ENCODE measurements at regions of chr1 and their contacts with region 1.

Region 1: DNA sequence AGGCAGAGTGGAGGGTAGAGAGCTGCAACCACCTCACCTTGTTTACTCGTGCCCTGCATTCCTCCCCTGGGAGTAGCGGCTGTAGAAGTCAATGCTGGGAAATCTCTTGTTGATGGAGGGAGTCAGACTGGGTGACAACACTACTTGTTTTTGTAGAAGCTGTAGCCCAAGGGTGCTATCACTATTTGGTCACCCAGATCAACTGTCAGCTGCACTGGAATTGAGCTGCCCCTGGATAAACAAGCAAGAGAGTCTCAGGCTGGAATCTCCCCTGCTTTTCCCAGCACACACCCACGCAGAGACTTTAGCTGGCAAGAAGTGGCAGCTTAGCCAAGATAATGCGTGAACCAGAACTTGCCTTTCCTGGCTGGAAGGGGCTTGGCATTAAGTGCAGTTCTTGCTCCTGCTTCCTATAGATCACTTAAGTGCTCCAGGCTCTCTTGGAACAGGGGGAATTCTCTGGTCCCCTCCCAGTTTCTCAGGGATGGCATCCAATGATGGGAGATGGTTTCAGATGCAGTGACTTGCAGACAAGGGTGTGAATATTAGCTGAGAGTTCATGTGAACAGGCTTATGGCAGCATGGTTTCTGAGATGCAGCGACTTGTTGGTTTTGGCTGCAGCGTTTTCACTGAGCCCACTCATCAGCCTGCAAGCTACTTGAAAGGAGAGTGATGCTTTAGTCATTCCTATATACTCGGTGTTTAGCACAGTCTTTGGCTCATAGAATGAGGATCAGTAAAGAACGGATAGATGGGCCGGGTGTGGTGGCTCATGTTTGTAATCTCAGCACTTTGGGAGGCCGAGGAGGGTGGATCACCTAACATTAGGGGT is 16.8 kb downstream of the ATP2B4 start:
- DNase-seq: peak; percentile 86
- H3K4me3 ChIP-seq: no peak overlapping the region
- H3K27ac ChIP-seq: peak overlapping the region; percentile 51
- H3K4me1 ChIP-seq: peaks cover 43% of the 10 kb centered on the region
- H3K27me3 ChIP-seq: no peaks in the 10 kb centered on the region
- CTCF ChIP-seq: no peak

Region 2: GRCh38 chr1:203202431-203203245 is 440.8 kb before region 1 on chr1:
- CTCF ChIA-PET with region 1: no interaction called
- dilution Hi-C with region 1: no loop called
- in situ Hi-C with region 1: no loop called
- intact Hi-C with region 1: no loop called
- DNase-seq: peak; percentile 17
- H3K4me3 ChIP-seq: no peak overlapping the region
- H3K27ac ChIP-seq: no peak overlapping the region
- H3K4me1 ChIP-seq: peaks cover 15% of the 10 kb centered on the region
- H3K27me3 ChIP-seq: no peaks in the 10 kb centered on the region
- CTCF ChIP-seq: no peak

Region 3: DNA sequence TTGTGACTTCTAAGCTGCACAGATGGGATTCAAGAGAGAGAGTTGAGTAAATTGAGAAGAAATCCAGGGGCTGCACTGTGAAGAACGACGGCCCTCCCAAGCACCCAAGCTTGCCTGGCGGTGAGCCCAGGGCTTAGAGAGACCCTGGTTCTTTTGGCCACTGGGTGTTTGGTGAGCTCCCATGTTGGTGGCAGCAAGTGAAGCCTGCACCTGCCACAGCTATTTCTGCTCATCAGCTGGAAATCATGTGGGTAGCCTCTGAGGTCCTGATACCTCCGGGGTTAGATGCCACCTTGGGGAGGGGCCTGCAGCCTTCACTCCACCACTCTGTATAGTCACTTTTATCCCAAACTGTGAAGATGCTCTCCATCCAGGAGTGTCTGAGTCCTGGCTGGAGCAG is 344.3 kb before region 1 on chr1:
- CTCF ChIA-PET with region 1: no interaction called
- dilution Hi-C with region 1: no loop called
- in situ Hi-C with region 1: no loop called
- intact Hi-C with region 1: no loop called
- DNase-seq: no peak
- H3K4me3 ChIP-seq: no peak overlapping the region
- H3K27ac ChIP-seq: no peak overlapping the region
- H3K4me1 ChIP-seq: peaks cover 15% of the 10 kb centered on the region
- H3K27me3 ChIP-seq: no peaks in the 10 kb centered on the region
- CTCF ChIP-seq: no peak

Region 4: DNA sequence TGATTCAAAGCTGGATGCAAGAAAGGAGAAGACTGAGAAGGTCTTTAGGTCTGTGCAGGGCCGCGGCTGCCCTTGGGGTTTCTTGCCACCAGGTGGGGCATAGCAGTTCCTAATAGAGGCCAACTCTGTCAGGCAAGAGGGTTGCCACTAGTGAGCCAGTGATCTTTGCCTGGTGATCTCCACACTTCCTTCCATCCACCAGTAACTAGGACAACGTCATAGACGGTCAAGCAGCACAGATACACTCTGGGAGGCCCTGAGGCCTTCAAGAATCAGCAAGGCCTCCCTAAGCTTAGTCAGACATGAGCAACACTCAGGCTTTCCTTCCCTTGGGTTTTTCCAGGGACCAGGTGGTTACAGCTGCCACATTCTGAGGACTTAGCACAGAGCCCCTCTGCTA is 49.7 kb before region 1 on chr1:
- CTCF ChIA-PET with region 1: no interaction called
- dilution Hi-C with region 1: no loop called
- in situ Hi-C with region 1: no loop called
- intact Hi-C with region 1: loop called (anchors 5 kb)
- DNase-seq: peak; percentile 62
- H3K4me3 ChIP-seq: no peak overlapping the region
- H3K27ac ChIP-seq: no peak overlapping the region
- H3K4me1 ChIP-seq: peaks cover 3% of the 10 kb centered on the region
- H3K27me3 ChIP-seq: no peaks in the 10 kb centered on the region
- CTCF ChIP-seq: peak; percentile 11 to 39

Region 5: GRCh38 chr1:203711251-203712007 is 68.0 kb after region 1 on chr1:
- CTCF ChIA-PET with region 1: no interaction called
- dilution Hi-C with region 1: no loop called
- in situ Hi-C with region 1: no loop called
- intact Hi-C with region 1: no loop called
- DNase-seq: no peak
- H3K4me3 ChIP-seq: no peak overlapping the region
- H3K27ac ChIP-seq: no peak overlapping the region
- H3K4me1 ChIP-seq: peaks cover 8% of the 10 kb centered on the region
- H3K27me3 ChIP-seq: no peaks in the 10 kb centered on the region
- CTCF ChIP-seq: no peak